ENCODE measurements at regions of chr7 and their contacts with region 1.

Region 1: DNA sequence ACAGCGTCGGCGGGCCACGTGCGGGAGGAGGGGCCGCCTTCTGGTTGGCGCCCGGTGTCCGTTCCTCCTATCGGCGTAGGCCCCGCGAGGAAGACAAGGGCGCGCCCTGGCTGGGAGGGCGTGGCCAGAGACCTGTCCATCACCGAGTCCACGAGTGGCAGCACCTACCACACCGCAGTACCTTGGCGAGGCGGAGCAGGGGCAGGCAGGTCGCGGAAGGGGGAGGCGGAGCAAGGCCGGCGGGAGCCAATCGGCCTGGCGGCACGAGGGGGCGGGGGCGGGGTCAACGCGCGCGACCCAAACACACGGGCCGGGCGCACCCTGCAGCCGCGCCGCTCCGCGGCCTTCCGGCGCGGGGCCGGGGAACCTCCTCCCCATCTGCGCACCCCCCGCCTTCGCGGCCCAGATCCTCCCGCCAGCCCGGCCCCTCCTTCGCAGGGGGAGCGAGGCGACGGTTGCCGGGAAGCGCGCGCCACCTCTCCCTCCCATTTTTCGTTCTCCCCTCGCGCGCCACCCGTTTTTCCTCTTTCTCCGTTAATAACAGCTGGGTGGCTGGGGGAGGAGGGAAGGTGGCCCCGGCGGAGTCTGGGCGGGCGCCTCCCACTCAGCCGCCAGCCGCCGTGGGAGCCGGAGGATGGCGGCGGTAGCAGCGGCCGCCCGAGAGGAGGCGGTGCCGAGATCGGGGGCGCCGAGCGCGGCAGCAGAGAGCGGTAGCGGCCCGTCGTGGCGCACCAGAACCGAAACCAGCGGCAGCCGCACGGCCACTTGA is at the start of gene ZNRF2:
- DNase-seq: peak; percentile 100
- ATAC-seq: peak; percentile 76 to 79
- H3K4me3 ChIP-seq: peak within 1 kb of the TSS; percentile 77 to 98 (median 81)
- H3K27ac ChIP-seq: peak within 1 kb of the TSS; percentile 91 to 99 (median 96)
- H3K4me1 ChIP-seq: peaks cover 32 to 39% of the 10 kb centered on the region in 2 donors
- H3K27me3 ChIP-seq: no peaks in the 10 kb centered on the region
- CTCF ChIP-seq: peak; percentile 39 to 53 (median 50)
- POLR2A ChIP-seq: peak; percentile 89 to 93
- total RNA-seq, gene ZNRF2: 9.6 to 19.3 (median 17.4) TPM

Region 2: DNA sequence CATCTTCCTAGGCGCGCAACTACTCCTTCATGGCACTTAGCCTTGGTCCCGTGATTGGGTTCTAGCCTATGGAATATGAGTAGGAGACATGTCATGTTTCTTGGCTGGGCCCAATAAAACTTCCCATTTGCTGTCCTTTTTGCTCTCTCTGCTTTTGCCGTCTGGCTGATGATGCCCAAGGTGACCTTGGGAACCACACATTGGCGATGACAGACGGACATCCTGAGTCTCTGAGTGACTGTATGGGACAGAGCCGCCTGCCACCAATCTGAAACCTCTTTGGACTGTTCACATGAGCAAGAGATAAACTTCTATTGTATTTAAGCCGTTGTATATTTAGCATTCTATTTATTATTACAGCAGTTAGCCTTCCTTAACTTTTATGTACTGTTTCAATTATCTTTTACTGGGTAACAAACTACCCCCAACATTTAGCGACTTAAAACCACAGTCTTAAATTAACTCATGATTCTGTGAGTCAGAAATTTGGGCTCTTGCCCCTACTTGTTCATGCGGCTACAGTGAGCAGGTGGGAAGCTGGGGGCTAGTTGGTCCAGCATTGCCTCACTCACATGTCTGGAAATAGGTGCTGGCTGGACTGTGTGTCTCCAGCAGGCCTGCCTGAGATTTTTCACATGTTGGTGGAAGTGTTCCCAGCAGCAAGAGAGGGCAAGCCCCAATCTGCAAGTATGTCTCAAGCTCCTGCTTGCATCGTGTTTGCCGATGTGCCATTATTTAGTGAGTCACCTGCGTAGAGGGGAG is 122.4 kb after region 1 on chr7:
- in situ Hi-C with region 1: loop called in 2 of 4 experiments (anchors 5 kb)
- intact Hi-C with region 1: loop called (anchors 2 kb)
- DNase-seq: peak; percentile 84 to 94
- ATAC-seq: peak; percentile 96
- H3K4me3 ChIP-seq: peak overlapping the region in 2 of 4 donors; percentile 8 to 9
- H3K27ac ChIP-seq: peak overlapping the region; percentile 83 to 87 (median 84)
- H3K4me1 ChIP-seq: peaks cover 0 to 4% of the 10 kb centered on the region in 2 donors
- H3K27me3 ChIP-seq: no peaks in the 10 kb centered on the region
- CTCF ChIP-seq: no peak
- POLR2A ChIP-seq: no peak

Region 3: GRCh38 chr7:30478349-30479201 is 194.1 kb after region 1 on chr7 and contains the start of gene NOD1:
- in situ Hi-C with region 1: no loop called
- intact Hi-C with region 1: loop called (anchors 5 kb)
- DNase-seq: peak; percentile 52 to 66
- ATAC-seq: peak; percentile 88 to 92
- H3K4me3 ChIP-seq: peak within 1 kb of the TSS; percentile 68 to 97 (median 86)
- H3K27ac ChIP-seq: peak within 1 kb of the TSS; percentile 78 to 95 (median 89)
- H3K4me1 ChIP-seq: peaks cover 23 to 40% of the 10 kb centered on the region in 2 donors
- H3K27me3 ChIP-seq: no peaks in the 10 kb centered on the region
- CTCF ChIP-seq: peak in 1 of 5 experiments; percentile 18
- POLR2A ChIP-seq: peak; percentile 25 to 48
- total RNA-seq, gene NOD1: 2.3 to 4.6 (median 3.6) TPM

Region 4: DNA sequence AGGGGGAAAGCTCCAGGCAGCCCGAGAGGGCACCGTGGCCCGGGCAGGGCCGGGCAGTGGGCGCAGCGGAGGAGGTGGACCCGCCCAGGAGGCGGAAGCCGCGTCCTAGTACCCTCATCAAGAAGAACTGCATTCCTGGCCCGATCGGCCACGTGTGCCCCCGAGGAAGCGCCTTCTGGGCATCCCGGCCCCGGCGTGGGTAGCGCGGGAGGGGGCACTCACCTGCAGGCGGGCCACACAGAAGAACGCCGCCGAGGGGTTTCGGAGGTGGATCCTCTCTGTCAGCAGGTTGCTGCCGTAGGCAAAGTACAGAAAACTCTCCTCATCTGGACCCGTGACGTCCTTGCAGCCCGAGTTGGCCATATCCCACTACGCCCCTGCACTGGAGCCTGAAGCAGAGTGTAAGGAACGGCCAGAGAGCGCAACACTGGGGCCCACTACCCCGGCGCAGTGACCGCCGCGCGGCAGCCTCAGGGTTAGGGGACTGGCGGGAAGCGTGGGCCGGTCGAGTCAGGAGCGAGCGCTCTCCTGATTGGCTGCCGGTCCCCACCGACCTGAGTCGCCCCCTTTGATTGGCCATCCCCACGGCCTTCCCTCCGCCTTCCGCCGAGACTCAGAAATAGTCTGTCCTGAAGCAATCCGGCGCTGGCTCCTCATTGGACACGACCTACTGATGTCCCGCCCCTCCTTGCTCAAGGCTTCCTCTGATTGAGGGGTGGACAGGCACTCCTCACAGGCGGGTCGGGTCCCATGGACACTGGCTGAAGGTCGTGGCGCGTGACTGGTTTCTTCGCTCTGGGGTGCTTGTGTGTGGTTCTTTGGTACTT is 220.1 kb after region 1 on chr7 and contains the start of gene GGCT:
- in situ Hi-C with region 1: no loop called
- intact Hi-C with region 1: loop called (anchors 10 kb)
- DNase-seq: peak; percentile 100
- ATAC-seq: peak; percentile 99
- H3K4me3 ChIP-seq: peak within 1 kb of the TSS; percentile 89 to 99 (median 94)
- H3K27ac ChIP-seq: peak within 1 kb of the TSS; percentile 91 to 96 (median 94)
- H3K4me1 ChIP-seq: peaks cover 12 to 21% of the 10 kb centered on the region in 2 donors
- H3K27me3 ChIP-seq: no peaks in the 10 kb centered on the region
- CTCF ChIP-seq: peak in 1 of 5 experiments; percentile 11
- POLR2A ChIP-seq: peak; percentile 66 to 90
- total RNA-seq, gene GGCT: 7.4 to 20.0 (median 12.8) TPM

Measured in gastrocnemius medialis (tissue), 4 donors.